ENCODE measurements at regions of chr5 and their contacts with region 1.

Region 1: GRCh38 chr5:103224118-103224893 is 34.3 kb upstream of the MACIR start:
- DNase-seq: peak in 11 of 14 experiments; percentile 2 to 72 (median 17)
- ATAC-seq: peak; percentile 97
- H3K4me3 ChIP-seq: no peak overlapping the region
- H3K4me3 Mint-ChIP-seq: no peak overlapping the region
- H3K27ac ChIP-seq: no peak overlapping the region
- H3K27ac Mint-ChIP-seq: no peak overlapping the region
- H3K4me1 ChIP-seq: peaks cover 5% of the 10 kb centered on the region
- H3K4me1 Mint-ChIP-seq: no peaks in the 10 kb centered on the region
- H3K27me3 ChIP-seq: peaks cover 0 to 10% of the 10 kb centered on the region in 2 experiments
- H3K27me3 Mint-ChIP-seq: peaks cover 24% of the 10 kb centered on the region
- CTCF ChIP-seq: peak; percentile 47

Region 2: GRCh38 chr5:102536323-102536928 is 687.9 kb before region 1 on chr5:
- CTCF ChIA-PET with region 1: no interaction called
- POLR2A ChIA-PET with region 1: no interaction called
- intact Hi-C with region 1: loop called in 1 of 2 experiments (anchors 5 kb)
- DNase-seq: peak in 2 of 14 experiments; percentile 4 to 7
- ATAC-seq: no peak
- H3K4me3 ChIP-seq: no peak overlapping the region
- H3K4me3 Mint-ChIP-seq: no peak overlapping the region
- H3K27ac ChIP-seq: no peak overlapping the region
- H3K27ac Mint-ChIP-seq: no peak overlapping the region
- H3K4me1 ChIP-seq: no peaks in the 10 kb centered on the region
- H3K4me1 Mint-ChIP-seq: no peaks in the 10 kb centered on the region
- H3K27me3 ChIP-seq: no peaks in the 10 kb centered on the region
- H3K27me3 Mint-ChIP-seq: peaks cover 3% of the 10 kb centered on the region
- CTCF ChIP-seq: peak; percentile 56

Region 3: GRCh38 chr5:102583276-102584124 is 640.8 kb before region 1 on chr5:
- CTCF ChIA-PET with region 1: no interaction called
- POLR2A ChIA-PET with region 1: no interaction called
- intact Hi-C with region 1: loop called (anchors 5 to 10 kb)
- DNase-seq: peak in 3 of 14 experiments; percentile 2 to 11 (median 9)
- ATAC-seq: no peak
- H3K4me3 ChIP-seq: no peak overlapping the region
- H3K4me3 Mint-ChIP-seq: no peak overlapping the region
- H3K27ac ChIP-seq: no peak overlapping the region
- H3K27ac Mint-ChIP-seq: no peak overlapping the region
- H3K4me1 ChIP-seq: no peaks in the 10 kb centered on the region
- H3K4me1 Mint-ChIP-seq: no peaks in the 10 kb centered on the region
- H3K27me3 ChIP-seq: no peaks in the 10 kb centered on the region
- H3K27me3 Mint-ChIP-seq: no peaks in the 10 kb centered on the region
- CTCF ChIP-seq: peak; percentile 55

Region 4: DNA sequence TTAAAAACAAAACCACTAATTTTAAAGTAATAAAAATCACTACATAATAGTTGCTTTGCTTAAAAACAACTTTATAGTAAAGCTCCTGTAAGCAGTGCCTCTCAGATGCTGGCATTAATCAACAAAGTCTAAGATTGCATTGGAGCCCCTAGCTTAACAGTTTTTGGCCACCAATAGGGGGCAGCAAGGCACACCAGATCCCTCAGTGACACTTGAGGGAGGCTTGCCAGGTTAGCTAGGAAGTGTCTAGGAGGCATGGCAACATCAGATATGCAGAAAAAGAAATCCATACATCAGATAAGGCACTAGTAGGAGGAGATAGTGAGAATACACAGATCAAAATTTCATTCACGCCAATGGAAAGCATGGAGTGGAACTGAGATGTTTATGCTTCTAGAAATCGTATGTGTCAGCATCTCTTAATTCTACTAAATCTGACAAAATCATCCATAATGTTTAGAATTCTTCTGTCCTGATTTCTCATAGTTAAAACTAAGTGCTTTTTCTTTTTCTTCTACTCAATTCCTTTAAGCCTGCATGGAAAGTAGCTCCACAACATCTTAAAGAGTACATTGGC is 542.8 kb before region 1 on chr5:
- CTCF ChIA-PET with region 1: no interaction called
- POLR2A ChIA-PET with region 1: no interaction called
- intact Hi-C with region 1: loop called in 1 of 2 experiments (anchors 10 kb)
- DNase-seq: peak; percentile 19 to 71 (median 34)
- ATAC-seq: peak; percentile 44
- H3K4me3 ChIP-seq: no peak overlapping the region
- H3K4me3 Mint-ChIP-seq: no peak overlapping the region
- H3K27ac ChIP-seq: no peak overlapping the region
- H3K27ac Mint-ChIP-seq: no peak overlapping the region
- H3K4me1 ChIP-seq: no peaks in the 10 kb centered on the region
- H3K4me1 Mint-ChIP-seq: no peaks in the 10 kb centered on the region
- H3K27me3 ChIP-seq: no peaks in the 10 kb centered on the region
- H3K27me3 Mint-ChIP-seq: no peaks in the 10 kb centered on the region
- CTCF ChIP-seq: peak; percentile 63

Region 5: GRCh38 chr5:103132684-103133083 is 91.6 kb before region 1 on chr5:
- CTCF ChIA-PET with region 1: no interaction called
- POLR2A ChIA-PET with region 1: no interaction called
- intact Hi-C with region 1: no loop called
- DNase-seq: no peak
- ATAC-seq: no peak
- H3K4me3 ChIP-seq: no peak overlapping the region
- H3K4me3 Mint-ChIP-seq: no peak overlapping the region
- H3K27ac ChIP-seq: no peak overlapping the region
- H3K27ac Mint-ChIP-seq: peak overlapping the region; percentile 55
- H3K4me1 ChIP-seq: no peaks in the 10 kb centered on the region
- H3K4me1 Mint-ChIP-seq: peaks cover 57% of the 10 kb centered on the region
- H3K27me3 ChIP-seq: no peaks in the 10 kb centered on the region
- H3K27me3 Mint-ChIP-seq: no peaks in the 10 kb centered on the region
- CTCF ChIP-seq: no peak

Measured in CD4-positive, alpha-beta T cell (primary cell).